Mammary epithelial cell (primary cell): ENCODE measurements at regions of chr6 and their contacts with region 1.

Region 1: DNA sequence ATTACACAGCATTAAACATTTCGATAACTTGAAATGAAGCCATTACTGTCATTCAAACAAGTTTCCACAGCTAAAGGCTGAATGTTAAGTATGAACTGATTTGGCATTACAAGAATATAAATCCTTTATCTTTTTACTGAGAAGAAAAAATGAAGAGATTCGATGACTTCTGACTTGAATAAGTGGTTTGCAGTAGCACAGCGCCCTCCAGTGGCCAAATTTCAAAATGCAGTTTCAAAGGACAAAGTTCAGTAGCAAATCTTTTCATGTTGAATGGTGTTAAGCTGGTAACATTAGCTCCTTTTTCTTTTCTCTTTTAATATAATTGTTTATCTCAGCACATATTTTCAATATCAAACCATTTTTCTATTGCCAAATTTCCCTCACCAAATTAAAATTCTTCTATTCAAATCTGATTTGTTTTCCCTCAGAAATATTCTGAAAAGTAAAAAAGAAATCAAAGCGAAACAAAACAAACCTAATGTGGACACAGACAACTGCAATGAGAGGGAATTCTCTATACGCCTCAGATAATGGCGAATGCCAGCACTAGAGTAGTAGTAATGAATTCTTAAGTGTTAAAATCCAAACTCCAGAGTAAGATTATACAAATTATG is 145.7 kb downstream of the BTBD9 start:
- DNase-seq: peak; percentile 42
- H3K4me3 ChIP-seq: no peak overlapping the region
- H3K27ac ChIP-seq: no peak overlapping the region
- H3K4me1 ChIP-seq: no peaks in the 10 kb centered on the region
- H3K27me3 ChIP-seq: no peaks in the 10 kb centered on the region
- CTCF ChIP-seq: peak; percentile 72 to 82

Region 2: GRCh38 chr6:37698261-37699137 is 795.5 kb before region 1 on chr6:
- CTCF ChIA-PET with region 1: no interaction called
- dilution Hi-C with region 1: no loop called
- in situ Hi-C with region 1: no loop called
- intact Hi-C with region 1: loop called (anchors 1 kb)
- DNase-seq: peak; percentile 46
- H3K4me3 ChIP-seq: peak overlapping the region; percentile 60 to 81 (median 66)
- H3K27ac ChIP-seq: no peak overlapping the region
- H3K4me1 ChIP-seq: peaks cover 23% of the 10 kb centered on the region
- H3K27me3 ChIP-seq: no peaks in the 10 kb centered on the region
- CTCF ChIP-seq: no peak

Region 3: GRCh38 chr6:37741757-37742400 is 752.2 kb before region 1 on chr6:
- CTCF ChIA-PET with region 1: no interaction called
- dilution Hi-C with region 1: no loop called
- in situ Hi-C with region 1: loop called in 1 of 2 experiments (anchors 25 kb)
- intact Hi-C with region 1: no loop called
- DNase-seq: no peak
- H3K4me3 ChIP-seq: no peak overlapping the region
- H3K27ac ChIP-seq: no peak overlapping the region
- H3K4me1 ChIP-seq: no peaks in the 10 kb centered on the region
- H3K27me3 ChIP-seq: no peaks in the 10 kb centered on the region
- CTCF ChIP-seq: peak; percentile 21 to 41

Region 4: GRCh38 chr6:37860226-37860839 is 633.7 kb before region 1 on chr6:
- CTCF ChIA-PET with region 1: no interaction called
- dilution Hi-C with region 1: no loop called
- in situ Hi-C with region 1: no loop called
- intact Hi-C with region 1: loop called (anchors 5 kb)
- DNase-seq: no peak
- H3K4me3 ChIP-seq: no peak overlapping the region
- H3K27ac ChIP-seq: no peak overlapping the region
- H3K4me1 ChIP-seq: peaks cover 16% of the 10 kb centered on the region
- H3K27me3 ChIP-seq: no peaks in the 10 kb centered on the region
- CTCF ChIP-seq: peak; percentile 56 to 70

Region 5: DNA sequence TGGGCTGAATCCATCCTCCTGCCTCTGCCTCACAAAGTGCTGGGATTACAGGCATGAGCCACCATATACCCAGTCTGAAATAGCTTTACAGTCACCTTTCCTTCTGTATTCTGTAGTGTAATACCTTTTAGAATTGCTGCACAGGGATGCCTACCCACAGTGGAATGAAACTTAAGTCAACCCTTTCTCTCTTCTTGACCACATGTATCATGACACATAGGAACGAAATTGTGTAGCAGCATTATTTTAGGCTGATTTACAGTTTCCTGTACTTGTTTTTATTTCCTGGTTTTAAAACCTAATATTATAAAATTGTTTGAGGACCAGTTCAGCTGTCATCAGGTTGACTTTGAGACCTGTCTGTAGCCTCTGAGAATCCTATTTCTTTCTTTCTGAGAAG is 376.8 kb before region 1 on chr6:
- CTCF ChIA-PET with region 1: no interaction called
- dilution Hi-C with region 1: loop called (anchors 5 kb)
- in situ Hi-C with region 1: no loop called
- intact Hi-C with region 1: no loop called
- DNase-seq: peak; percentile 69
- H3K4me3 ChIP-seq: no peak overlapping the region
- H3K27ac ChIP-seq: no peak overlapping the region
- H3K4me1 ChIP-seq: peaks cover 30% of the 10 kb centered on the region
- H3K27me3 ChIP-seq: no peaks in the 10 kb centered on the region
- CTCF ChIP-seq: no peak

Region 6: GRCh38 chr6:38234934-38235682 is 258.9 kb before region 1 on chr6:
- CTCF ChIA-PET with region 1: no interaction called
- dilution Hi-C with region 1: no loop called
- in situ Hi-C with region 1: no loop called
- intact Hi-C with region 1: loop called (anchors 5 kb)
- DNase-seq: no peak
- H3K4me3 ChIP-seq: no peak overlapping the region
- H3K27ac ChIP-seq: no peak overlapping the region
- H3K4me1 ChIP-seq: no peaks in the 10 kb centered on the region
- H3K27me3 ChIP-seq: no peaks in the 10 kb centered on the region
- CTCF ChIP-seq: no peak

Region 7: GRCh38 chr6:38671885-38672467 is 177.9 kb after region 1 on chr6:
- CTCF ChIA-PET with region 1: no interaction called
- dilution Hi-C with region 1: no loop called
- in situ Hi-C with region 1: no loop called
- intact Hi-C with region 1: loop called (anchors 5 kb)
- DNase-seq: peak; percentile 56
- H3K4me3 ChIP-seq: no peak overlapping the region
- H3K27ac ChIP-seq: no peak overlapping the region
- H3K4me1 ChIP-seq: no peaks in the 10 kb centered on the region
- H3K27me3 ChIP-seq: no peaks in the 10 kb centered on the region
- CTCF ChIP-seq: peak; percentile 66 to 88